PC-9 (cell line): ENCODE measurements at regions of chr19 and their contacts with region 1.

Region 1: DNA sequence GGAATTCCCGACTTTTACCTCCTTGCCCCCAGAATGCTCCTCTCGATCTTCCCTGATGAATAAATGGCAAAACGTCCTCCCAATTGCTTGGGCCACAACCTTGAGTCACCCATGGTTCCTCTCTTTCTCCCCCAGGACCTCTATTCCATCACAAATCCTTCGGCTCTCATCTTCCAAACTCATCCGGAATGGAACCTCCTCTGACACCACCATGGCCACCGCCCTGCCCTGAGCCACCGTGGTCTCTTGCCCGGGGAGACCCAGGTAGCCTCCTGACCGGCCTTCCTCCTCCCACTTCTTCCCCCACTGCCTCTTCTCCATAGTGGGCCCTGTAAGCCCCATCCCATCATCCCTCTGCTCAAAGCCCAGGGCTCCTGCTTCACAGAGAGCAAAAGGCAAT is 4.9 kb downstream of the SLC7A10 start:
- DNase-seq: no peak
- H3K4me3 ChIP-seq: no peak overlapping the region
- H3K27ac ChIP-seq: no peak overlapping the region
- H3K4me1 ChIP-seq: no peaks in the 10 kb centered on the region
- H3K27me3 ChIP-seq: peaks cover 69% of the 10 kb centered on the region
- CTCF ChIP-seq: no peak

Region 2: DNA sequence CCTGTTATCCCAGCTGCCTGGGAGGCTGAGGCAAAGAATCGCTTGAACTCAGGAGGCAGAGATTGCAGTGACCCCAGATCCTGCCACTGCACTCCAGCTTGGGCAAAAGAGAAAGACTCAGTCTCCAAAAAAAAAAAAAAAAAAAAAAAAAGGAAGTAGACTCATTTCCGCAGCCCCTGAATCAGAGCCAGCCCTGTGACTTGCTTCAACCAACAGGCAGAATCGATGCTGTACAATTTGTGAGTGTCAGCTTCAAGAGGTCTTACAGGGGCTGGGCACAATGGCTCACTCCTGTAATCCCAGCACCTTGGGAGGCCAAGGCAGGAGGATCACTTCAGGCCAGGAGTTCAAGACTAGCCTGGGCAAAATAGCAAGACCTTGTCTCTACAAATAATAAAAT is 558.5 kb before region 1 on chr19:
- CTCF ChIA-PET with region 1: interaction called, 10 read pairs
- POLR2A ChIA-PET with region 1: no interaction called
- intact Hi-C with region 1: no loop called
- DNase-seq: no peak
- H3K4me3 ChIP-seq: no peak overlapping the region
- H3K27ac ChIP-seq: no peak overlapping the region
- H3K4me1 ChIP-seq: no peaks in the 10 kb centered on the region
- H3K27me3 ChIP-seq: no peaks in the 10 kb centered on the region
- CTCF ChIP-seq: no peak

Region 3: GRCh38 chr19:33080761-33081681 is 139.7 kb before region 1 on chr19 and contains the start of gene GPATCH1:
- CTCF ChIA-PET with region 1: no interaction called
- POLR2A ChIA-PET with region 1: no interaction called
- intact Hi-C with region 1: no loop called
- DNase-seq: peak; percentile 69 to 86
- H3K4me3 ChIP-seq: peak within 1 kb of the TSS; percentile 86
- H3K27ac ChIP-seq: no peak within 1 kb of the TSS
- H3K4me1 ChIP-seq: peaks cover 30% of the 10 kb centered on the region
- H3K27me3 ChIP-seq: no peaks in the 10 kb centered on the region
- CTCF ChIP-seq: no peak
- total RNA-seq, gene GPATCH1: 11.0 and 12.4 TPM in 2 replicates